ENCODE measurements at regions of chr1 and their contacts with region 1.

Region 1: GRCh38 chr1:221809031-221810029 is 67.4 kb upstream of the DUSP10 start:
- DNase-seq: no peak
- ATAC-seq: peak; percentile 73
- H3K4me3 ChIP-seq: 0 out of 2 replicates have a peak overlapping the region, but pooled peaks have one; percentile 0
- H3K27ac ChIP-seq: 0 out of 2 replicates have a peak overlapping the region, but pooled peaks have one; percentile 6
- H3K4me1 ChIP-seq: peaks cover 18% of the 10 kb centered on the region
- H3K27me3 ChIP-seq: no peaks in the 10 kb centered on the region
- CTCF ChIP-seq: no peak
- EP300 ChIP-seq: no peak; a peak in 1 of 4 replicates
- POLR2A ChIP-seq: no peak
- RAD21 ChIP-seq: no peak

Region 2: GRCh38 chr1:221783936-221784335 is 25.4 kb before region 1 on chr1:
- CTCF ChIA-PET with region 1: interaction called, 3 read pairs
- POLR2A ChIA-PET with region 1: interaction called, 5 read pairs
- RAD21 ChIA-PET with region 1: interaction called, 15 read pairs
- SMC1A ChIA-PET with region 1: interaction called, 11 read pairs
- in situ Hi-C with region 1: no loop called
- intact Hi-C with region 1: no loop called
- DNase-seq: no peak
- ATAC-seq: peak; percentile 18; the same call in 2 of the 3 replicates
- H3K4me3 ChIP-seq: no peak overlapping the region
- H3K27ac ChIP-seq: no peak overlapping the region
- H3K4me1 ChIP-seq: peaks cover 51% of the 10 kb centered on the region
- H3K27me3 ChIP-seq: no peaks in the 10 kb centered on the region
- CTCF ChIP-seq: no peak
- EP300 ChIP-seq: no peak
- POLR2A ChIP-seq: no peak
- RAD21 ChIP-seq: no peak

Region 3: GRCh38 chr1:221824025-221824424 is 14.7 kb after region 1 on chr1:
- CTCF ChIA-PET with region 1: interaction called, 3 read pairs
- POLR2A ChIA-PET with region 1: interaction called, 3 read pairs
- RAD21 ChIA-PET with region 1: interaction called, 6 read pairs
- SMC1A ChIA-PET with region 1: interaction called, 13 read pairs
- in situ Hi-C with region 1: no loop called
- intact Hi-C with region 1: no loop called
- DNase-seq: no peak
- ATAC-seq: peak; percentile 79
- H3K4me3 ChIP-seq: no peak overlapping the region
- H3K27ac ChIP-seq: peak overlapping the region; percentile 30; the same call in 1 of the 2 replicates
- H3K4me1 ChIP-seq: peaks cover 16% of the 10 kb centered on the region
- H3K27me3 ChIP-seq: no peaks in the 10 kb centered on the region
- CTCF ChIP-seq: no peak
- EP300 ChIP-seq: no peak
- POLR2A ChIP-seq: no peak
- RAD21 ChIP-seq: no peak

Measured in GM12878 (cell line).